ENCODE measurements at regions of chr11 and their contacts with region 1.

Region 1: DNA sequence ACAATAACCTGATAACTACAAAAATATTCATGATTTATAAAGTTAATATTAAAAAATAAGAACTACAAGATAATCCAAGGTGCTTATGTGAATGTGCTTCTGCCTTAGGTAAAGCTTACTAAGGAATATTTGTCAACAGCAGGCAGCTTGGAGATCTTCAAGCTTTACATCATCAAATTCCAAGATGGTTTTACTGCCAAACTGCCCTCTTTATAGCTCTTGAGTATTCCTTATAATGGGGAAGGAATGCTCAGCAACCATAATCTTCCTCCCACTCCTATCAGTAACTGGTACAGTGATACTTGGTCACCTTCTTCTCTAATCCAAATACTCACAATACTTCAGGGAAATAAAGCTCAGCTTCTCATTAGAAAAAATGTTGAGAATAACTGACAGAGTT is 30.1 kb downstream of the SBF2 start:
- DNase-seq: no peak
- ATAC-seq: no peak
- H3K4me3 ChIP-seq: no peak overlapping the region
- H3K4me3 Mint-ChIP-seq: no peak overlapping the region
- H3K27ac ChIP-seq: no peak overlapping the region
- H3K27ac Mint-ChIP-seq: no peak overlapping the region
- H3K4me1 ChIP-seq: no peaks in the 10 kb centered on the region
- H3K4me1 Mint-ChIP-seq: peaks cover 2% of the 10 kb centered on the region
- H3K27me3 ChIP-seq: no peaks in the 10 kb centered on the region
- H3K27me3 Mint-ChIP-seq: peaks cover 7% of the 10 kb centered on the region
- CTCF ChIP-seq: no peak

Region 2: GRCh38 chr11:10221342-10221741 is 42.6 kb before region 1 on chr11:
- CTCF ChIA-PET with region 1: no interaction called
- POLR2A ChIA-PET with region 1: no interaction called
- intact Hi-C with region 1: loop called (anchors 5 kb)
- DNase-seq: no peak
- ATAC-seq: no peak
- H3K4me3 ChIP-seq: no peak overlapping the region
- H3K4me3 Mint-ChIP-seq: no peak overlapping the region
- H3K27ac ChIP-seq: no peak overlapping the region
- H3K27ac Mint-ChIP-seq: no peak overlapping the region
- H3K4me1 ChIP-seq: peaks cover 0 to 9% of the 10 kb centered on the region in 2 donors
- H3K4me1 Mint-ChIP-seq: peaks cover 2% of the 10 kb centered on the region
- H3K27me3 ChIP-seq: no peaks in the 10 kb centered on the region
- H3K27me3 Mint-ChIP-seq: no peaks in the 10 kb centered on the region
- CTCF ChIP-seq: no peak

Region 3: GRCh38 chr11:10623797-10624761 is 360.1 kb after region 1 on chr11:
- CTCF ChIA-PET with region 1: no interaction called
- POLR2A ChIA-PET with region 1: no interaction called
- intact Hi-C with region 1: no loop called
- DNase-seq: no peak
- ATAC-seq: no peak
- H3K4me3 ChIP-seq: no peak overlapping the region
- H3K4me3 Mint-ChIP-seq: peak overlapping the region; percentile 53
- H3K27ac ChIP-seq: peak overlapping the region; percentile 79 to 88
- H3K27ac Mint-ChIP-seq: peak overlapping the region; percentile 98
- H3K4me1 ChIP-seq: peaks cover 47 to 69% of the 10 kb centered on the region in 2 donors
- H3K4me1 Mint-ChIP-seq: peaks cover 77% of the 10 kb centered on the region
- H3K27me3 ChIP-seq: no peaks in the 10 kb centered on the region
- H3K27me3 Mint-ChIP-seq: no peaks in the 10 kb centered on the region
- CTCF ChIP-seq: no peak

Measured in B cell (primary cell).